ENCODE measurements at regions of chr5 and their contacts with region 1.

Region 1: GRCh38 chr5:55344392-55344992 is 36.7 kb downstream of the MTREX start:
- DNase-seq: peak; percentile 71
- H3K4me3 Mint-ChIP-seq: no peak overlapping the region
- H3K27ac Mint-ChIP-seq: peak overlapping the region; percentile 11
- H3K4me1 Mint-ChIP-seq: peaks cover 19% of the 10 kb centered on the region
- H3K27me3 Mint-ChIP-seq: no peaks in the 10 kb centered on the region
- CTCF ChIP-seq: peak; percentile 78

Region 2: DNA sequence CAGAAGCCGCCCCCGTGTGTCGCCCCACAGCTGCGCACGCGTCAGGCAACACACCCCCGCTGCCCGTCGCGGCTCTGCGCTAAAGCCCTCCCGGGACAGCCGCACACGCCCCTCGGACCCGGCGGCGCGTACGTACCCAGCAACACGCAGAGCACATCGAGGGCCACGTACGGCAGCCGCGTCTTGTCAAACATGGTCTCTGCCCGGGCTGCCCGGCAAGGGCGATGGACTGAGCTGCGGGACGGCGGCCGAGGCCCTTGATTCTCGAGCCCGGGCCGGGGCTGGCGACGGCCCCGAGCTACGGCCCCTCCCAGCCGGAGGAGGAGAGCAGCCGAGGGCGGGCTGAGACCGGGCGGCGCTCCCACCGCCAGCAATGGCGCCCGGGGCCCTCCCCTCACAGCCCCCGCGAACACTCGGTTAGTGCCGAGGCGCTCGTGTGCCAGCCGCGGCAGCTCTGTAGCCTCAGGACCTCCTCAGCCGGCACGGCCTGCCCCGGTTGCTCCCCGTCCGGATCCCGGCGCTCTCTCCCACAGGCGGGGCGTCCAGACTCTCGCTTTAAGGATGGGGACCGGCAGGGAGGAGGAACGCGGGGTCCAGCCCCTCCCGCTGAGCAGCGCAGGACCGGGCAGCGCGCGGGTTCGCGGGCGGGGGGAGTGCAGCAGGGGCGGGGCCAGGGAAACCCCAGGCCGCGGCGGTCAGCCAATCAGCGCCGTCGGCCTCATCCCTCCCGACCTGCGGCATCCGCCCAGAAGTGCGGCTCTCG is 190.1 kb after region 1 on chr5 and contains the start of gene PLPP1:
- CTCF ChIA-PET with region 1: no interaction called
- intact Hi-C with region 1: loop called (anchors 10 kb)
- DNase-seq: peak; percentile 91
- H3K4me3 Mint-ChIP-seq: peak within 1 kb of the TSS; percentile 79
- H3K27ac Mint-ChIP-seq: peak within 1 kb of the TSS; percentile 73
- H3K4me1 Mint-ChIP-seq: peaks cover 18% of the 10 kb centered on the region
- H3K27me3 Mint-ChIP-seq: no peaks in the 10 kb centered on the region
- CTCF ChIP-seq: no peak
- total RNA-seq, gene PLPP1: 20.2 and 21.5 TPM in 2 replicates

Region 3: DNA sequence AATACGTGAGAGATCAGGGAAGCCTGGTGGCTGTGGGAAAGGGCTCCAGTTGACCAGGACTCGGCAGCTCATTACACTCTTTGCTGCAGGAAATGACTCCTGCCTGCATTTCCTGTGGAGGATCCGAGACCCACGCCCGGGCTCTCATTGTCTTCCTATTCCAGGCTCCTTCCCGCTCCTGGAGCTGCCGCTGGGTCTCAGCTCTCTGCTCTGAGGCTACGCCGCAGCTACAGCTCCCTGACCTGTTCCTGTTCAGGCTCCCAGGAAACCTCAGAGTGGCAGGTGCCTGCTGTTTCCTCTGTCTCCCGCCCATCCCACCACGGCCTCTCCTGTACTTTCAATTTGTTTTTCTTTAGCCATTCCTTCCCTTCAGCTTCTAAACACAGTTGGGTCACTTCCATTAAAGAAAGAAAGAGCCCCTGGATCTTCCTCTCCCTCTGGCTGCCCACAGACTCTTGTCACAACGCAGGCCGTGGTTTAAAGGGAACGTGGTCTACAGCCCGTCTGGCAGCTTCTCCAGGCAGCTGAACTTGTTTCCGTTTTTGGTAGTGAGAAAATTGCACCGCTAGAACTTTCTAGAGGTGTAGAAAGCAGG is 578.8 kb after region 1 on chr5:
- CTCF ChIA-PET with region 1: no interaction called
- intact Hi-C with region 1: loop called (anchors 10 kb)
- DNase-seq: no peak
- H3K4me3 Mint-ChIP-seq: peak overlapping the region; percentile 5
- H3K27ac Mint-ChIP-seq: no peak overlapping the region
- H3K4me1 Mint-ChIP-seq: peaks cover 17% of the 10 kb centered on the region
- H3K27me3 Mint-ChIP-seq: no peaks in the 10 kb centered on the region
- CTCF ChIP-seq: no peak

Region 4: GRCh38 chr5:56279979-56280378 is 935.5 kb after region 1 on chr5:
- CTCF ChIA-PET with region 1: no interaction called
- intact Hi-C with region 1: no loop called
- DNase-seq: peak; percentile 29
- H3K4me3 Mint-ChIP-seq: no peak overlapping the region
- H3K27ac Mint-ChIP-seq: peak overlapping the region; percentile 21
- H3K4me1 Mint-ChIP-seq: peaks cover 9% of the 10 kb centered on the region
- H3K27me3 Mint-ChIP-seq: no peaks in the 10 kb centered on the region
- CTCF ChIP-seq: no peak